Stomach (tissue), 19 donors: ENCODE measurements at regions of chr22 and their contacts with region 1.

Region 1: GRCh38 chr22:31983911-31984656 is 39.7 kb downstream of the YWHAH start:
- DNase-seq: no peak
- H3K4me3 ChIP-seq: no peak overlapping the region
- H3K27ac ChIP-seq: no peak overlapping the region
- H3K4me1 ChIP-seq: no peaks in the 10 kb centered on the region
- H3K27me3 ChIP-seq: no peaks in the 10 kb centered on the region
- CTCF ChIP-seq: no peak
- EP300 ChIP-seq: no peak
- POLR2A ChIP-seq: no peak

Region 2: GRCh38 chr22:32080904-32081303 is 96.8 kb after region 1 on chr22:
- intact Hi-C with region 1: loop called (anchors 10 kb)
- DNase-seq: peak; percentile 45 to 62
- H3K4me3 ChIP-seq: no peak overlapping the region
- H3K27ac ChIP-seq: no peak overlapping the region
- H3K4me1 ChIP-seq: peaks cover 0 to 24% (median 16%) of the 10 kb centered on the region in 4 donors
- H3K27me3 ChIP-seq: no peaks in the 10 kb centered on the region
- CTCF ChIP-seq: peak in 5 of 7 experiments; percentile 36 to 72 (median 68)
- EP300 ChIP-seq: no peak
- POLR2A ChIP-seq: no peak